ENCODE measurements at regions of chr16 and their contacts with region 1.

Region 1: DNA sequence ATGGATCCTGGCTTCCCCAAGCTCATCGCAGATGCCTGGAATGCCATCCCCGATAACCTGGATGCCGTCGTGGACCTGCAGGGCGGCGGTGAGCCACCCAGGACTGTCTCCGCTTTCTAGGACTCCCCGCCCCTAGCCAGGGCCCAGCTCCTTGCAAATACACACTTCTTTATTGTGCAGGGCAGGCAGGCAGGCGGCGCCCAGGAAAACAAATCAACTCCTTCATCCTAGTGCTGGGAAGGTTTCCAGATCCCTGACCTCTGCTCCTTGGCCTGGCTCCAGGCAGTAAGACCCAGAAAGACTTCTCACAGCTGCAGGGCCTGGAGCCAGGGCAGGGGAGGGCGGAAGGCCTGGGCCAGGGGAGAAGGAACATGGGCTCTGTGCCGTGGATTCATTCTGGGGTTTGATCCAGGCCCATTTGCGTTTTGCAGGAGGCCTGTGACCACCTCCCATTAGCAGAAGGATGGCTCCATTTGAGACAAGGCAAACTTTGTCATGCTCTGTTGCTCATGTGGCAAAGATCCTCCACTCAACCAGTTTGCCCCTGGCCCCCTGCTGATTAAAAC is 6.0 kb upstream of the LPCAT2 start:
- DNase-seq: no peak
- H3K4me3 ChIP-seq: no peak overlapping the region
- H3K27ac ChIP-seq: no peak overlapping the region
- H3K4me1 ChIP-seq: 0 out of 7 replicates have a peak, but pooled peaks cover 0 to 2% (median 0%) of the 10 kb centered on the region in 4 experiments
- H3K27me3 ChIP-seq: no peaks in the 10 kb centered on the region
- CTCF ChIP-seq: no peak
- EP300 ChIP-seq: no peak
- POLR2A ChIP-seq: no peak
- RAD21 ChIP-seq: no peak

Region 2: DNA sequence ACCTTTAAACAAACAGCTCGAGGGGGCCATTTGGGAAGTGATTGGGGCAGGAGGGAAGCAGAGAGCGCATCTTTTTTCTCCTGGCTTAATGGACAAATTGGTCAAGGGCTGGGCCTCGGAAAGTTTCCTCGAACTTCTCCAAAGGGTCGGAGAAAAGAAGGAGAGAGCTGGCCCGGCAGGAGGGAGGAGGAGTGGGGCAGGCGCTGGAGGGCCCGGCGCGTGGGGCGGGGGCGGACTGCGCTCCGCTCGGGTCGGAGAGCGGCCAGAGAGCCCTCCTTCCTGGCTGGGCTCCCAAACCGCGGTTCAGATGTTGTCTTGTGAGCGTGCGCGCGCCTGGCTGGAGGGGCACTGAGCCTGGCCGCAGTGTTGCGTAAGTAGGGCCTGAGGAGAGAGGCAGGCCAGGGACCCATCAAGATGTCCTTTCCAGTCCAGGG is 22.6 kb before region 1 on chr16:
- CTCF ChIA-PET with region 1: interaction called, 15 read pairs
- POLR2A ChIA-PET with region 1: interaction called, 4 read pairs
- DNase-seq: peak in 1 of 2 experiments; percentile 63
- H3K4me3 ChIP-seq: peak overlapping the region; percentile 28 to 75 (median 65)
- H3K27ac ChIP-seq: no peak overlapping the region
- H3K4me1 ChIP-seq: peaks cover 3 to 16% (median 7%) of the 10 kb centered on the region in 4 experiments
- H3K27me3 ChIP-seq: peaks cover 7 to 48% (median 31%) of the 10 kb centered on the region in 4 experiments
- CTCF ChIP-seq: no peak
- EP300 ChIP-seq: no peak
- POLR2A ChIP-seq: no peak
- RAD21 ChIP-seq: no peak

Region 3: DNA sequence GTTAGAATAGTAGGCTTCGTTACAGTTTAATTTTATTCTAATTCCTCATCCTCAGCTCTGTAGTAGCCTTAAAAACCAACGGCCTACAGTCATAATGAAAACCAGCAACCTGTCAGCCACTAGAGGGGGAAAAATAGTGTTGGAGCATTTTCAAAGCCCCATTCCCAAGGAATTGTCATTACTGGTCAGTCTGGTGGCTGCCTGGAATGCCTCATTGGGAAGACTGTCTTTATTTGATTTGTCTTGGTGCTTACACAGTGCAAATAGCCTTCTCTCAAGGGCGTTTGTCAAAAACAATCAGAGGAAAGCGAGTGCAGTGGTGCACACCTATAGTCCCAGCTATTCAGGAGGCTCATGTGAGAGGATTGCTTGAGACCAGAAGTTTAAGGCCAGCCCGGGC is 10.7 kb after region 1 on chr16:
- CTCF ChIA-PET with region 1: interaction called, 16 read pairs
- POLR2A ChIA-PET with region 1: no interaction called
- DNase-seq: no peak
- H3K4me3 ChIP-seq: no peak overlapping the region
- H3K27ac ChIP-seq: no peak overlapping the region
- H3K4me1 ChIP-seq: peaks cover 0 to 4% (median 2%) of the 10 kb centered on the region in 4 experiments; a peak in 4 of 7 replicates
- H3K27me3 ChIP-seq: no peaks in the 10 kb centered on the region; a peak in 1 of 7 replicates
- CTCF ChIP-seq: peak in 2 of 3 experiments; percentile 15 to 27; a peak in 2 of 4 replicates
- EP300 ChIP-seq: no peak
- POLR2A ChIP-seq: no peak
- RAD21 ChIP-seq: peak in 1 of 2 experiments; percentile 5; a peak in 1 of 4 replicates

Region 4: GRCh38 chr16:55655860-55656695 is 153.2 kb after region 1 on chr16 and contains the start of gene SLC6A2:
- CTCF ChIA-PET with region 1: interaction called, 12 read pairs
- POLR2A ChIA-PET with region 1: no interaction called
- DNase-seq: peak; percentile 21 to 80
- H3K4me3 ChIP-seq: peak within 1 kb of the TSS; percentile 45 to 76 (median 54)
- H3K27ac ChIP-seq: no peak within 1 kb of the TSS
- H3K4me1 ChIP-seq: peaks cover 0 to 3% (median 1%) of the 10 kb centered on the region in 4 experiments; a peak in 4 of 7 replicates
- H3K27me3 ChIP-seq: peaks cover 38 to 62% (median 51%) of the 10 kb centered on the region in 4 experiments
- CTCF ChIP-seq: peak; percentile 21 to 40 (median 39)
- EP300 ChIP-seq: no peak
- POLR2A ChIP-seq: no peak
- RAD21 ChIP-seq: no peak; a peak in 1 of 4 replicates
- total RNA-seq, gene SLC6A2: 0.40 TPM in 1 of 2 replicates, not detected in the other

Measured in H1 (cell line).